ENCODE measurements at regions of chr6 and their contacts with region 1.

Region 1: GRCh38 chr6:99330159-99330558 is 19.3 kb downstream of the FAXC start:
- DNase-seq: peak; percentile 49 to 54
- H3K4me3 ChIP-seq: no peak overlapping the region
- H3K27ac ChIP-seq: no peak overlapping the region
- H3K4me1 ChIP-seq: no peaks in the 10 kb centered on the region
- H3K27me3 ChIP-seq: no peaks in the 10 kb centered on the region
- CTCF ChIP-seq: peak in 5 of 6 experiments; percentile 44 to 71 (median 61)
- POLR2A ChIP-seq: no peak

Region 2: GRCh38 chr6:99402448-99402847 is 72.3 kb after region 1 on chr6:
- intact Hi-C with region 1: loop called (anchors 10 kb)
- DNase-seq: no peak
- H3K4me3 ChIP-seq: no peak overlapping the region
- H3K27ac ChIP-seq: no peak overlapping the region
- H3K4me1 ChIP-seq: no peaks in the 10 kb centered on the region
- H3K27me3 ChIP-seq: no peaks in the 10 kb centered on the region
- CTCF ChIP-seq: no peak
- POLR2A ChIP-seq: no peak

Measured in thyroid gland (tissue), 4 donors.